CD8-positive, alpha-beta T cell (primary cell): ENCODE measurements at regions of chr5 and their contacts with region 1.

Region 1: GRCh38 chr5:180950291-180950949 is 38.2 kb upstream of the BTNL3 start:
- DNase-seq: no peak
- ATAC-seq: no peak
- H3K4me3 ChIP-seq: no peak overlapping the region
- H3K4me3 Mint-ChIP-seq: no peak overlapping the region
- H3K27ac ChIP-seq: no peak overlapping the region
- H3K27ac Mint-ChIP-seq: no peak overlapping the region
- H3K4me1 ChIP-seq: no peaks in the 10 kb centered on the region
- H3K4me1 Mint-ChIP-seq: no peaks in the 10 kb centered on the region
- H3K27me3 ChIP-seq: no peaks in the 10 kb centered on the region
- H3K27me3 Mint-ChIP-seq: peaks cover 4% of the 10 kb centered on the region
- CTCF ChIP-seq: no peak

Region 2: DNA sequence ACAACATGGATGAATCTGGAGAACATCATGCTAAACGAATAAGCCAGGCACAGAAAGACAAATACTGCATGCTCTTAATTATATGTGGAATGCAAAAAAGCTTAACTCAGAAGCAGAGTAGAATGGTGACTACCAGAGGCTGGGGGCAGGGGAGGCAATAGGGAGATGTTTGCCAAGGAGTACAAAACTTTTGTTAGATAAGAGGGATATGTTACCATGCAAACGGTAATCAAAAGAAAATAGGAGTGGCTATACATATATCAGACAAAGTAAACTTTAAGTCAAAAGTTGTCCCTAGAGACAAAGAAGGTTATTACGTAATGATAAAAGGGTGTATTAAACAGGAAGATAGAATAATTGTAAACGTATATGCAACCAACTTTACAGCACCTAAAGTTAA is 20.5 kb after region 1 on chr5:
- CTCF ChIA-PET with region 1: no interaction called
- POLR2A ChIA-PET with region 1: no interaction called
- intact Hi-C with region 1: no loop called
- DNase-seq: no peak
- ATAC-seq: no peak
- H3K4me3 ChIP-seq: no peak overlapping the region
- H3K4me3 Mint-ChIP-seq: no peak overlapping the region
- H3K27ac ChIP-seq: no peak overlapping the region
- H3K27ac Mint-ChIP-seq: no peak overlapping the region
- H3K4me1 ChIP-seq: no peaks in the 10 kb centered on the region
- H3K4me1 Mint-ChIP-seq: no peaks in the 10 kb centered on the region
- H3K27me3 ChIP-seq: no peaks in the 10 kb centered on the region
- H3K27me3 Mint-ChIP-seq: peaks cover 2% of the 10 kb centered on the region
- CTCF ChIP-seq: no peak

Region 3: DNA sequence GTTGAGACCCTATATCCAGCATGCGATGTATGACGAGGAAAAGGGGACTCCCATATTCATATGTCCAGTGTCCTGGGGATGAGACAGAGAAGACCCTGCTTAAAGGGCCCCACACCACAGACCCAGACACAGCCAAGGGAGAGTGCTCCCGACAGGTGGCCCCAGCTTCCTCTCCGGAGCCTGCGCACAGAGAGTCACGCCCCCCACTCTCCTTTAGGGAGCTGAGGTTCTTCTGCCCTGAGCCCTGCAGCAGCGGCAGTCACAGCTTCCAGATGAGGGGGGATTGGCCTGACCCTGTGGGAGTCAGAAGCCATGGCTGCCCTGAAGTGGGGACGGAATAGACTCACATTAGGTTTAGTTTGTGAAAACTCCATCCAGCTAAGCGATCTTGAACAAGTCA is 55.4 kb after region 1 on chr5:
- CTCF ChIA-PET with region 1: no interaction called
- POLR2A ChIA-PET with region 1: no interaction called
- intact Hi-C with region 1: loop called in 1 of 2 experiments (anchors 1 kb)
- DNase-seq: no peak
- ATAC-seq: no peak
- H3K4me3 ChIP-seq: no peak overlapping the region
- H3K4me3 Mint-ChIP-seq: no peak overlapping the region
- H3K27ac ChIP-seq: no peak overlapping the region
- H3K27ac Mint-ChIP-seq: no peak overlapping the region
- H3K4me1 ChIP-seq: no peaks in the 10 kb centered on the region
- H3K4me1 Mint-ChIP-seq: no peaks in the 10 kb centered on the region
- H3K27me3 ChIP-seq: no peaks in the 10 kb centered on the region
- H3K27me3 Mint-ChIP-seq: peaks cover 17% of the 10 kb centered on the region
- CTCF ChIP-seq: no peak